H1 (cell line): ENCODE measurements at regions of chr5 and their contacts with region 1.

Region 1: GRCh38 chr5:169265888-169266287 is 35.1 kb downstream of the SLIT3 start:
- DNase-seq: no peak
- H3K4me3 ChIP-seq: no peak overlapping the region
- H3K27ac ChIP-seq: no peak overlapping the region
- H3K4me1 ChIP-seq: peaks cover 0 to 6% (median 0%) of the 10 kb centered on the region in 4 experiments; a peak in 3 of 7 replicates
- H3K27me3 ChIP-seq: no peaks in the 10 kb centered on the region
- CTCF ChIP-seq: peak in 2 of 3 experiments; percentile 29 to 45; a peak in 2 of 4 replicates
- EP300 ChIP-seq: no peak
- POLR2A ChIP-seq: no peak
- RAD21 ChIP-seq: peak; percentile 39 to 42

Region 2: GRCh38 chr5:169100421-169101075 is 165.3 kb before region 1 on chr5:
- CTCF ChIA-PET with region 1: no interaction called
- POLR2A ChIA-PET with region 1: no interaction called
- DNase-seq: no peak
- H3K4me3 ChIP-seq: no peak overlapping the region
- H3K27ac ChIP-seq: no peak overlapping the region
- H3K4me1 ChIP-seq: peaks cover 0 to 13% (median 6%) of the 10 kb centered on the region in 4 experiments; a peak in 3 of 7 replicates
- H3K27me3 ChIP-seq: no peaks in the 10 kb centered on the region; a peak in 1 of 7 replicates
- CTCF ChIP-seq: no peak
- EP300 ChIP-seq: no peak
- POLR2A ChIP-seq: no peak
- RAD21 ChIP-seq: no peak

Region 3: DNA sequence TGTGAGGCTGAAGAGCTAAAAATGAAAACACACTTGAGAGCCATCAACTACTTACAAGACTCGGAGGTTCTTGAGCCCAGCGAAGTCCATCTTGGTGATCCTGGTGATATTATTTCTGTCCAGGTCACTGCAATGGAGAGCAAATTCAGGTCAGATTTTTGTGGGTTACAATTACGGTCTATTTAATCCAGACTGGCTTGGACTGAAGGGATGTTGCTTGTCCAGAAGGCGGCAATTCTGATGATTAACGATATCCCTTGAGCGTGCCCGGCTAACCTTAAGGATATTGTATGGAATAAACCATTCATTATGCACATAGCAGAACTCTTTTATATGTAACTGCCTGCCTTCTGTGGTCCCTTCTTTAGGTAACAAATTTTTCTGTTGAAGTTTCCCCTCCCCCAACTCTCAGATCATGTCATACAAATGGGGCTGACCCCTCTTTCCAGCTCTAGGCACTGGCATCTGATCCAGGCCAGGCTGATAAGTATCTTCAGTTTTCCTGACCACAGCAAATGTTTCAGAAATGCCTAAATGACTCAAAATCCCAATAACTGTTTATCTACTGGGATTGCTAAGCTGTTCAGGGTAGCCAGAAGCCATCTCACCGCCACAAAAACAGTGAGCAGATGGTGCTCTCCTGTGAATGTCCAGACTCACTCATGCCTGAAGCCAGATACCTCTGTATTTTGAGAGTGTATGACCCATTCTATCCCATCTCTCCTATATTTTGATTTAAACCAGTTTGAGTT is 14.4 kb before region 1 on chr5:
- CTCF ChIA-PET with region 1: interaction called, 33 read pairs
- POLR2A ChIA-PET with region 1: no interaction called
- DNase-seq: no peak
- H3K4me3 ChIP-seq: no peak overlapping the region
- H3K27ac ChIP-seq: no peak overlapping the region
- H3K4me1 ChIP-seq: no peaks in the 10 kb centered on the region
- H3K27me3 ChIP-seq: no peaks in the 10 kb centered on the region
- CTCF ChIP-seq: no peak
- EP300 ChIP-seq: no peak
- POLR2A ChIP-seq: no peak
- RAD21 ChIP-seq: no peak

Region 4: DNA sequence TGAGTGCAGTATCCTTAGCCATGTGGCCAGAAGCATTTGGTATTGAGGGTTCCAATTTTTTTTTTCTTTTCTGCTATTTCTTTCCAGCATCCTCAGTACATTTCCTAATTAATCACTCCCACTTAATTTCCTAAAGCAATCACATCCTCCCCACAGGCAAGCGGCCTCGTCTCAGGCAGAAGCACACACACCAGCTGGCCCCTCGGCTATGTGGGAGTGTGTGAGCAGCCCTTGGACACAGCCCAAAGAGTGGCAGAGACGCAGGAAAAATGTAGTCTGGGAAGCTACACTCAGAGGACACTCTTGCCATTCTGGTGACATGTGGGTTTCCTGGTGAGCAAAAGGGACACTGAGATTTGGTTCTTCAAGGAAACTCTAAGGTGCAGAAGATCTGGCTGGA is 14.4 kb after region 1 on chr5:
- CTCF ChIA-PET with region 1: interaction called, 14 read pairs
- POLR2A ChIA-PET with region 1: no interaction called
- DNase-seq: no peak
- H3K4me3 ChIP-seq: no peak overlapping the region
- H3K27ac ChIP-seq: no peak overlapping the region
- H3K4me1 ChIP-seq: peaks cover 0 to 14% (median 5%) of the 10 kb centered on the region in 4 experiments; a peak in 5 of 7 replicates
- H3K27me3 ChIP-seq: no peaks in the 10 kb centered on the region; a peak in 1 of 7 replicates
- CTCF ChIP-seq: no peak
- EP300 ChIP-seq: no peak
- POLR2A ChIP-seq: no peak
- RAD21 ChIP-seq: no peak

Region 5: DNA sequence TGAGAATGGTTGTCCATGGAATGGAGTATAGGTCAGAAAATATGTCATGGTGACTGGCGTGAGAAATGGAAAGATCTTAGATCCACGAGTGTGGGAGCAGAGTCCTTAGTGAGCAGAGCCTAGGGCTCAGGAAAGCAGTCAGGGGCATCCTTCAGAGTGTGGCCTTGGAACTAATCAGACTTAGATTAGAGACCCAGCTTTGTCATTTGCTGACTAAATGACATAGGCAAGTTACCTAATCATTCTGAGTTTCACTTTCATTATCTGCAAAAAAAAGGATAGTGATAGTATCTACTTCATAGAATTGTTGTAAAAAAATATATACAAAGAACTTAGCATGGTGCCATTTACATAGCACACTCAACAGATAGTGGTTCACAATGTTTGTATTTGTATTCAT is 59.4 kb after region 1 on chr5:
- CTCF ChIA-PET with region 1: no interaction called
- POLR2A ChIA-PET with region 1: no interaction called
- DNase-seq: no peak
- H3K4me3 ChIP-seq: no peak overlapping the region
- H3K27ac ChIP-seq: no peak overlapping the region
- H3K4me1 ChIP-seq: no peaks in the 10 kb centered on the region
- H3K27me3 ChIP-seq: no peaks in the 10 kb centered on the region
- CTCF ChIP-seq: no peak
- EP300 ChIP-seq: no peak
- POLR2A ChIP-seq: no peak
- RAD21 ChIP-seq: no peak